CD4-positive, alpha-beta T cell (primary cell): ENCODE measurements at regions of chr20 and their contacts with region 1.

Region 1: GRCh38 chr20:31661625-31662371 is 24.1 kb downstream of the COX4I2 start:
- DNase-seq: peak; percentile 68 to 91 (median 77)
- ATAC-seq: peak; percentile 92
- H3K4me3 ChIP-seq: peak overlapping the region; percentile 58
- H3K4me3 Mint-ChIP-seq: peak overlapping the region; percentile 84
- H3K27ac ChIP-seq: no peak overlapping the region
- H3K27ac Mint-ChIP-seq: peak overlapping the region; percentile 50
- H3K4me1 ChIP-seq: peaks cover 21% of the 10 kb centered on the region
- H3K4me1 Mint-ChIP-seq: peaks cover 25% of the 10 kb centered on the region
- H3K27me3 ChIP-seq: no peaks in the 10 kb centered on the region
- H3K27me3 Mint-ChIP-seq: no peaks in the 10 kb centered on the region
- CTCF ChIP-seq: peak; percentile 81

Region 2: DNA sequence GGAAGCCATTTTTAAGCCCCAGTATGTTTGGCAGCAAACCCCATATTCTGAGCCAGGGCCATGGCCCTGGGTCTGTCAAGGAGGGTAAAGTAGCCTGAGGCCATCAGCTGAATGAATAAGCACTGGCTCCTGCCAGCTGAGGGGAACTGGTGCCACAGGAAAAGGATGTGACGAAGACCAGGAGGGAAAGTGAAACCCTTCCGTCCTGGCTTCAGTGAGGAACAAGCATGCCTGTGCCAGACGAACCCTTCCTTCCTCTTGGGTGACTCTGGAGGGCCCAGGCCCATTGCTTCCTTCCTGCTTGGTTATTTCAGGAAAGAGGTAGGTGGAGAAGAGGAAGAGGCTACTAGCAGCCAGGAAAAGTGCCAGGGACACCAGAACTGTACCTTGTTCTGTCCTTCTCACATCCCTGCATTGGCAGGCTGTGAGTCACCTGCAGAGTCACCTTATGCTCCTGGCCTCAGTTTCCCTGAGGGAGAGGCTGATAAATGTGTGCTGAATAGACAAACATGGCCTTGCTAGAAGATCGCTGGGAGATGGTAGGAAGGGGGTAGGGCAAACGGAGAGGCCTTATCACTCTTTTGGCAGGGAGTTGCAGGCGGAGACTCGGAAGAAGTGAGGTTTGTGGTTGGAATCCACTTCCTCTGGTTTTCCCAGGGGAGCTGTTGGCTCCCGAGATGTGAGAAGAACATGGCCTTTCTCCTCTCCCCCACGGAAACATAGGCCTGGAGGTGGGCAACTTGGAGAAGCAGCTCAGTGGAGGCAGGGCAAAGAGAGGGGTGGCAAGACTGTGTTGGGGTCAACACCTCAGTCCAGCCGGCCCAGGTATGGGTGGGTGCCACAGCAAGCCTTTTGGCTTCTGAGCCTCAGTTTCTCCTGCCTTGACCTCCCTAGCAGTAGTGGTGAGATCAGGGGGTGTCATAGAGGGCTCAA is 13.4 kb after region 1 on chr20:
- CTCF ChIA-PET with region 1: interaction called, 19 read pairs
- POLR2A ChIA-PET with region 1: interaction called, 17 read pairs
- intact Hi-C with region 1: no loop called
- DNase-seq: peak; percentile 33 to 89 (median 50)
- ATAC-seq: peak; percentile 86
- H3K4me3 ChIP-seq: peak overlapping the region; percentile 62
- H3K4me3 Mint-ChIP-seq: peak overlapping the region; percentile 96
- H3K27ac ChIP-seq: peak overlapping the region; percentile 76 to 90
- H3K27ac Mint-ChIP-seq: peak overlapping the region; percentile 96
- H3K4me1 ChIP-seq: peaks cover 83% of the 10 kb centered on the region
- H3K4me1 Mint-ChIP-seq: peaks cover 67% of the 10 kb centered on the region
- H3K27me3 ChIP-seq: no peaks in the 10 kb centered on the region
- H3K27me3 Mint-ChIP-seq: no peaks in the 10 kb centered on the region
- CTCF ChIP-seq: no peak

Region 3: GRCh38 chr20:31869942-31870725 is 208.3 kb after region 1 on chr20 and contains the starts of genes DUSP15 and TTLL9:
- CTCF ChIA-PET with region 1: no interaction called
- POLR2A ChIA-PET with region 1: no interaction called
- intact Hi-C with region 1: no loop called
- DNase-seq: peak in 4 of 14 experiments; percentile 9 to 29 (median 16)
- ATAC-seq: peak; percentile 37
- H3K4me3 ChIP-seq: peak within 1 kb of the TSS; percentile 29
- H3K4me3 Mint-ChIP-seq: peak within 1 kb of the TSS; percentile 89
- H3K27ac ChIP-seq: no peak within 1 kb of the TSS
- H3K27ac Mint-ChIP-seq: no peak within 1 kb of the TSS
- H3K4me1 ChIP-seq: peaks cover 16% of the 10 kb centered on the region
- H3K4me1 Mint-ChIP-seq: peaks cover 12% of the 10 kb centered on the region
- H3K27me3 ChIP-seq: peaks cover 27 to 35% of the 10 kb centered on the region in 2 experiments
- H3K27me3 Mint-ChIP-seq: peaks cover 53% of the 10 kb centered on the region
- CTCF ChIP-seq: no peak
- total RNA-seq, gene DUSP15: not detected
- total RNA-seq, gene TTLL9: not detected

Region 4: GRCh38 chr20:31966991-31967655 is 305.3 kb after region 1 on chr20:
- CTCF ChIA-PET with region 1: no interaction called
- POLR2A ChIA-PET with region 1: no interaction called
- intact Hi-C with region 1: no loop called
- DNase-seq: no peak
- ATAC-seq: no peak
- H3K4me3 ChIP-seq: no peak overlapping the region
- H3K4me3 Mint-ChIP-seq: no peak overlapping the region
- H3K27ac ChIP-seq: no peak overlapping the region
- H3K27ac Mint-ChIP-seq: no peak overlapping the region
- H3K4me1 ChIP-seq: peaks cover 10% of the 10 kb centered on the region
- H3K4me1 Mint-ChIP-seq: peaks cover 10% of the 10 kb centered on the region
- H3K27me3 ChIP-seq: peaks cover 27 to 55% of the 10 kb centered on the region in 2 experiments
- H3K27me3 Mint-ChIP-seq: peaks cover 81% of the 10 kb centered on the region
- CTCF ChIP-seq: no peak